GM10248 (cell line): ENCODE measurements at regions of chr1 and their contacts with region 1.

Region 1: GRCh38 chr1:160499631-160500030 is 23.4 kb downstream of the SLAMF6 start:
- DNase-seq: no peak
- CTCF ChIP-seq: no peak

Region 2: DNA sequence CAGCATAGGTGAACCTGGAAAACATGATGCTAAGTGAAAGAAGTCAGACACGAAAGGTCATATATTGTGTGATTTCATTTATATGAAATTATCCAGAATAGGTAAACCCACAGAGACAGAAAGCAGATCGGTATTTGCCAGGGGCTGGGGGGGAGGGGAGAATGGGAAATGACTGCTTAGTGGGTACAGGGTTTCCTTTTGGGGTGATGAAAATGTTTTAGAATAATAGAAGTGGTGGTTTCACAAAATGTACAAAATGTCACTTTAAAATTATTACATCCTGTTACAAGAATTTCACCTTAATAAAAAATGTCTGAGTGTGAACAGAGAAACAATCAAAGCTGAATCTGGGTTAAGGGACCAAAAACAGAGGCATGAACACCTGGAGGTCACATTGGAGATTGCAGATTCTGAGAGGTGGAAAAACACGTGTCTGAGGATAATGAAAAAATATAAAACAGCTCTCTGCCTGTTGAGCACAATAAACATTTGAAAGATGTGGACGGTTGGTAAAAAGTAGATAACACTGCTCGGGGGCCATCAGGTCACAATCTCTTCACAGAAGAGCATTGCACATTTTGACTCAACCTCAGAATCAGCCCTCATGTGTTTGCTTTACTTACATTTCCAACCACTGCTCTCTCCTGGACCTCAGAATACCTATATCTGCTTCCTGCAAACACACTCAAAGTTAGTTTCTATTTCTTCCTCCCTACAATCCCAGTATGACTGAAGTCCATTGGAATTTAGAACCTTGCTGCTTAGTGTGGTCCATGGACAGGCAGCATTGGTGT is 20.2 kb after region 1 on chr1:
- CTCF ChIA-PET with region 1: interaction called, 16 read pairs
- POLR2A ChIA-PET with region 1: no interaction called
- DNase-seq: no peak
- CTCF ChIP-seq: no peak